ENCODE measurements at regions of chr7 and their contacts with region 1.

Region 1: GRCh38 chr7:116236020-116236630 is 25.8 kb downstream of the TES start:
- DNase-seq: peak; percentile 68
- H3K4me3 Mint-ChIP-seq: no peak overlapping the region
- H3K27ac Mint-ChIP-seq: no peak overlapping the region
- H3K4me1 Mint-ChIP-seq: peaks cover 9% of the 10 kb centered on the region
- H3K27me3 Mint-ChIP-seq: no peaks in the 10 kb centered on the region
- CTCF ChIP-seq: peak; percentile 32

Region 2: GRCh38 chr7:116165717-116166116 is 70.4 kb before region 1 on chr7:
- CTCF ChIA-PET with region 1: interaction called, 127 read pairs
- POLR2A ChIA-PET with region 1: no interaction called
- intact Hi-C with region 1: no loop called
- DNase-seq: no peak
- H3K4me3 Mint-ChIP-seq: no peak overlapping the region
- H3K27ac Mint-ChIP-seq: no peak overlapping the region
- H3K4me1 Mint-ChIP-seq: peaks cover 7% of the 10 kb centered on the region
- H3K27me3 Mint-ChIP-seq: peaks cover 7% of the 10 kb centered on the region
- CTCF ChIP-seq: no peak

Region 3: GRCh38 chr7:116180302-116180701 is 55.8 kb before region 1 on chr7:
- CTCF ChIA-PET with region 1: interaction called, 409 read pairs
- POLR2A ChIA-PET with region 1: interaction called, 47 read pairs
- intact Hi-C with region 1: loop called (anchors 1 kb)
- DNase-seq: peak; percentile 73
- H3K4me3 Mint-ChIP-seq: no peak overlapping the region
- H3K27ac Mint-ChIP-seq: no peak overlapping the region
- H3K4me1 Mint-ChIP-seq: peaks cover 16% of the 10 kb centered on the region
- H3K27me3 Mint-ChIP-seq: no peaks in the 10 kb centered on the region
- CTCF ChIP-seq: peak; percentile 80

Region 4: GRCh38 chr7:116206141-116206540 is 30.0 kb before region 1 on chr7:
- CTCF ChIA-PET with region 1: interaction called, 20 read pairs
- POLR2A ChIA-PET with region 1: interaction called, 110 read pairs
- intact Hi-C with region 1: no loop called
- DNase-seq: no peak
- H3K4me3 Mint-ChIP-seq: no peak overlapping the region
- H3K27ac Mint-ChIP-seq: no peak overlapping the region
- H3K4me1 Mint-ChIP-seq: peaks cover 8% of the 10 kb centered on the region
- H3K27me3 Mint-ChIP-seq: no peaks in the 10 kb centered on the region
- CTCF ChIP-seq: no peak

Region 5: DNA sequence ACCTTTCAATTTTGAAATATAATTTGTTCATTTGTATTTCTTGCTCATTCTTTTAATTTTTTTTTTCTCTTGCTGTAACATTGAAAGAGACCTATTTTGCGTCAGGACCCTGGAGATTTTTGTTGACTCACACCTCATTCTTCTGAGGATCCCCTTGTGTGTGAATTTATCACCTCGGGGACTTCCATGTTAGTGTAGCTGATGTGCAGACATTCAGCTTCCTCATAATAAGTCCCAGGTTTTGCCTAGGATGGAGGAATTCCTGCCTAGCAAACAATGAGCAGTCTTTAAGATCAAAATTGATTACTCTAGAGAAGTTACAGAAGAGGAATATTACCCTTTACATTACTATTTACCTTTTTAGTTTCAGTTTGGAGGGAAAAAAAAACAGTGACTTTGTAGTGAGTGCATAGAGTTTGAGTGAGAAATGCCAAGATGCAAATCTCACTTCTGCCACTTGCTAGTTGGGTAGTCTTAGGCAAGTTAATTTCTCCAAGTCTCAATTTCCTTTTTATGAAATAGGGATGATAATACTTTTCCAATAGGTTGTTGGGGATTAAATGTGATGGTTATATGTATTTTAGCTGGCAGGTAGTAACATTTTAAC is 11.5 kb before region 1 on chr7:
- CTCF ChIA-PET with region 1: interaction called, 27 read pairs
- POLR2A ChIA-PET with region 1: interaction called, 63 read pairs
- intact Hi-C with region 1: no loop called
- DNase-seq: peak; percentile 29
- H3K4me3 Mint-ChIP-seq: peak overlapping the region; percentile 39
- H3K27ac Mint-ChIP-seq: peak overlapping the region; percentile 71
- H3K4me1 Mint-ChIP-seq: peaks cover 51% of the 10 kb centered on the region
- H3K27me3 Mint-ChIP-seq: no peaks in the 10 kb centered on the region
- CTCF ChIP-seq: no peak

Measured in MCF 10A (cell line).